Activated CD4-positive, alpha-beta T cell treated with anti-CD3 and anti-CD28 coated beads, Interleukin-2, amount 10 ng/mL, durations not matched to agents 24 days and 14 days (primary cell): ENCODE measurements at regions of chr2 and their contacts with region 1.

Region 1: DNA sequence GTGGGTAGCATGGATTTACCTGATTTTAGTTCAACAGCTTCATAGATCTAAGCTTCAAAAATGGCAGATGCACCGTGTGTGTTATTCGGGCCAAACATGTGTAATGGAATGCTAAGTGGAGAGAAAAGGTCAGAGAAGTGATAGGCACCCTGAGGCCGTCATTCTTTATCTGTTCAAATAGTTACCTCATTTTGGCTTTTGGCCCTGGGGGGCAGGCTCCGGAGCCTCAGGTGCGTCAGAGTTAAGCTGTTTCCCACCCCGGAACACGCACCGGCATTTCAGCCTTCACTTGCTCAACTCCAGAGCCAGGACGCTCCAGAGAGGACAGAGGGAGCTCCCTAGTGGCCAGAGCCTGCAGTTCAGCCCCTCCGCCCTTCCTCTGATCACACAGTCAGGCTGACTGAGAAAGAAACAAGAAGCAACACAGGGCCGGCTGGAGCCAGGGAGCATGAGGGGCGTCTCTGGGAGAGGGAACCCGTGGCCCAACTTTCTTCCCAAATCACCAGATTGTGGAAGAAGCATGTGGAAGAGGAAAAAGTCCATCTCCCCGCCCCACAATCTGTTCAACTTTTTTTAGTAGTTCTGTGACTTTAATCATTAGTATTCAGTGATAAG is 135.2 kb upstream of the EPC2 start:
- DNase-seq: peak; percentile 95
- H3K4me3 Mint-ChIP-seq: peak overlapping the region; percentile 73
- H3K27ac Mint-ChIP-seq: peak overlapping the region; percentile 66
- H3K4me1 Mint-ChIP-seq: peaks cover 31% of the 10 kb centered on the region
- H3K27me3 Mint-ChIP-seq: no peaks in the 10 kb centered on the region

Region 2: DNA sequence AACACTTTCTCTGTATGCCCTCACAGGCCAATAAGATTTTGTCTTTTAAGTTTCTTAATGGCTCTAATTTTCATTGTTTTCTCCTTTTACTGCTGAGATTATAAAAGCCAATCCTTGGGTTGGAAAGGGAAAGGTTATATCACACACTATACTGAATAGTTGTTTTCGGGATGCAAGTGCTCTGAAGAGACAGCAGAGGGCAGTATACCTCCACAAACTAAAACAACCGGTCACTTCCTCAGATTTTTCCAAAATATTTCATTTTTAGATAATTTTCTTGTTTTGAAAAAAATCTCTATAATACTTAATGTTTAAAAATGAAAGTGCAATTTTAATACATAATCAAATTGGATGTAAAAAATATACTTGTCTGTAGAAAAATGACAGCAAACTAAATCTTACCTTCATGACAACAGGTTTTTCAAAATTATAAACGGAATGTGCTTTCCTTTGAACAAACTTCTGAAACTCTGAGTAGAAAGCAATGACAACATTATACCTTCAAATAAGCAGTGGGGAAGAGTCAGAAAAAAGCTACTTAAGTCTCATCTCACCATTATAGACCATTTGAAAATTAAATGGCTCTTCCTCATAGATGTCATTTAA is 571.5 kb before region 1 on chr2:
- intact Hi-C with region 1: loop called (anchors 1 kb)
- DNase-seq: no peak
- H3K4me3 Mint-ChIP-seq: no peak overlapping the region
- H3K27ac Mint-ChIP-seq: no peak overlapping the region
- H3K4me1 Mint-ChIP-seq: peaks cover 2% of the 10 kb centered on the region
- H3K27me3 Mint-ChIP-seq: no peaks in the 10 kb centered on the region

Region 3: GRCh38 chr2:147989809-147990403 is 519.5 kb before region 1 on chr2:
- intact Hi-C with region 1: loop called (anchors 1 kb)
- DNase-seq: peak; percentile 72
- H3K4me3 Mint-ChIP-seq: no peak overlapping the region
- H3K27ac Mint-ChIP-seq: no peak overlapping the region
- H3K4me1 Mint-ChIP-seq: peaks cover 7% of the 10 kb centered on the region
- H3K27me3 Mint-ChIP-seq: no peaks in the 10 kb centered on the region

Region 4: DNA sequence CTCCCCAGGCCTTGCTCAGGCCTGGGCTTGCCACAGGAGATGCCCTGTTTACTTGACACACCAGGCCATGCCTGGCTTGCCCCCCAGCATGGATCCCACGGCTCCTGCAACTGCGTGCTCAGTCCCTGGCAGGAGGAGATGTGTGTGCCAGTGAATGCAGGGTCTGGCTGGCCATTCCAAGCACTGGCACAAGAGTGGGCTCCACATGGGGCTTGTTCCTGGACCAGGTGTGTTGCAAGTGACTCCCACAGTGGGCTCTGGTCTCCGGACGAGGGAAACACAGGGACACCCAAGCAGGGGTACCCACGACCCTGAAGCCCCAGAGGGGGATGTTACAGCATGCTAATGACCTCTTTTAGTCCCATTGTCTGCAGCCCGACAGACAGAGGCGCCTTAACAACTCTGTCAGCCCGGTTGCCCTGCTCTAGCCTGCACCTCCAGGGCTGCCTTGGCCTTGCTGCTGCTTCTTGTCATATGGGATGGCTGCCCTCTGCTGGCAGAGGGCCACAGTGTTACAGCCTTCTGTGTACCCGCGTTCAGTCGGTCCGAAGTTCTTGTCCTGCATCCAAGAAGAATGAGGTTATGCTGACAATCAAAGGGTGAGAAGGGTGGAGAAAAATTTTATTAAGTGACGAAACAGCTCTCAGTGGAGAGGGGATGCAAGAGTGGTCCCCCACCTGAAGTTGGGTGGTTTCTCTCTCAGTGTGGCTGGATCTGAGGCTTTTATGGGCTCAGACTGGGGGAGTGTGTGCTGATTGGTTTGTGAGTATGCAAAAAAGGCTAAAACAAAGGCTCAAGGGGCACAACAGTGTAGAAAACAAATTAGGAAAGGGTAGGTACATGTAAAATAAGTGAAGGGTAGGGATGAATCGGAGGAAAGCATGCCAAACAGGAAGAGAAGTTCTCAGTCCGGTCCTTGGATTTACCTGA is 308.1 kb before region 1 on chr2:
- intact Hi-C with region 1: loop called (anchors 5 kb)
- DNase-seq: peak; percentile 82
- H3K4me3 Mint-ChIP-seq: no peak overlapping the region
- H3K27ac Mint-ChIP-seq: no peak overlapping the region
- H3K4me1 Mint-ChIP-seq: no peaks in the 10 kb centered on the region
- H3K27me3 Mint-ChIP-seq: no peaks in the 10 kb centered on the region

Region 5: DNA sequence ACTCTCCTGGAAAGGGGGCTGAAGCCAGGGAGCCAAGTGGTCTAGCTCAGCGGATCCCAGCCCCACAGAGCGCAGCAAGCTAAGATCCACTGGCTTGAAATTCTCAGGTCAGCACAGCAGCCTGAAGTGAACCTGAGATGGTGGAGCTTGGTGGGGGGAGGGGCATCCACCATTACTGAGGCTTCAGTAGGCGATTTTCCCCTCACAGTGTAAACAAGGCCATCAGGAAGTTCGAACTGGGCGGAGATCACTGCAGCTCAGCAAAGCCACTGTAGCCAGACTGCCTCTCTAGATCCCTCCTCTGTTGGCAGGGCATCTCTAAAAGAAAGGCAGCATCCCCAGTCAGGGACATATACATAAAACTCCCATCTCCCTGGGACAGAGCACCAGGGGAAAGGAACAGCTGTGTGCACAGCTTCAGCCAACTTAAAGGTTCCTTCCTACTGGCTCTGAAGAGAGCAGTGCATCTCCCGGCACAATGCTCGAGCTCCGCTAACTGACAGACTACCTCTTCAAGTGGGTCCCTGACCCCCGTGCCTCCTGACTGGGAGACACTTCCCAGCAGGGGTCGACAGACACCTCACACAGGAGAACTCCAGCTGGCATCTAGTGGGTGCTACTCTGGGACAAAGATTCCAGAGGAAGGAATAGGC is 147.1 kb before region 1 on chr2:
- intact Hi-C with region 1: no loop called
- DNase-seq: no peak
- H3K4me3 Mint-ChIP-seq: no peak overlapping the region
- H3K27ac Mint-ChIP-seq: no peak overlapping the region
- H3K4me1 Mint-ChIP-seq: no peaks in the 10 kb centered on the region
- H3K27me3 Mint-ChIP-seq: no peaks in the 10 kb centered on the region

Region 6: GRCh38 chr2:148603562-148603920 is 94.1 kb after region 1 on chr2:
- intact Hi-C with region 1: no loop called
- DNase-seq: peak; percentile 77
- H3K4me3 Mint-ChIP-seq: no peak overlapping the region
- H3K27ac Mint-ChIP-seq: peak overlapping the region; percentile 93
- H3K4me1 Mint-ChIP-seq: peaks cover 18% of the 10 kb centered on the region
- H3K27me3 Mint-ChIP-seq: peaks cover 8% of the 10 kb centered on the region

Region 7: GRCh38 chr2:148948868-148949267 is 439.5 kb after region 1 on chr2:
- intact Hi-C with region 1: no loop called
- DNase-seq: no peak
- H3K4me3 Mint-ChIP-seq: no peak overlapping the region
- H3K27ac Mint-ChIP-seq: no peak overlapping the region
- H3K4me1 Mint-ChIP-seq: no peaks in the 10 kb centered on the region
- H3K27me3 Mint-ChIP-seq: no peaks in the 10 kb centered on the region